ENCODE measurements at regions of chr1 and their contacts with region 1.

Region 1: DNA sequence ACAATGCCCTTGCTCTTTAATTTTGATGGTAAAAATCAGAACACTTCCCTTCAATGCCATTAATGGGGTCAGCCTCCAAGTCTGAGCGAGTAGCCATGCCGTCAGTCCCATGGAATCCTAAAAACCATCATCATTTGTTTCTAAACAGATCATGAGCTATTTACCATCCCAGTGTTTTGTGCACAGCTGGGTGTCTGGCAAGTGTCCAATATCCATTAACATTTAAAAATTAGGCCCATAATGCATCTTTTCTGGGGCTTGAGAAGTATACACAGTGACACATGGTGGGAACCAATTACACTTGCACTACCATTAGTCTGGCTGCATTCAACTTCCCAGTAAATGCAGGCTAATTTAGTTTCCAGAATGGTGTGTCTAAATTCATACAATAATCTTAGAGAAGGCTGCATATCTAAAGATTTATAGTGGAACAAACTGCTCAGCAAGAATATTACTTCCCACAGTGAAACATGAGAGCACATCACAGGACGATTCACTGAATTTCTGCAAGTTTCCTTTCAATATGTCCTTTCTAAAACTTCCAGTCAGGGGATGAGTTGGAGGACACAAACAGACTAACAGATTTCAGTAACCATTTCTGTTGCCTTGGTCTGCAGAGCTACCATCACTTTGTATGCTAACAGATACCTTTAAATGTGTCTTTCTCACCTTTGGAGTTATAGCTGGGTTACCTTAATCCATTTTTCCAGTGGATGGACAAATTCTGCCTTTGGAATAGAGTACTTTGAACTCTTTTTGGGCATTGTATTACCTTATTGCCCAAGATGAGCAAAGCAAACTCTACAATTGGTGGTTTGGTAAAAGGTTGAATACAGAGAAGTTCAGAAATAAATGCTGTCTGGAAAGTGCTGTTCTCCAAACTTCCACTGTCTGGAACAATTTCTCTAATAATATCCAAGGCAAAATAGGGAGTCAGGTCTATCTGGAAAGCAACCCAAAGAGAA is 258.0 kb downstream of the PTBP2 start:
- DNase-seq: peak; percentile 26
- H3K4me3 ChIP-seq: no peak overlapping the region
- H3K27ac ChIP-seq: peak overlapping the region in 1 of 2 experiments; percentile 92; a peak in 2 of 4 replicates
- H3K4me1 ChIP-seq: peaks cover 14 to 25% of the 10 kb centered on the region in 2 experiments; a peak in 3 of 4 replicates
- H3K27me3 ChIP-seq: no peaks in the 10 kb centered on the region
- CTCF ChIP-seq: no peak
- EP300 ChIP-seq: peak in 1 of 2 experiments; percentile 70; a peak in 1 of 4 replicates
- RAD21 ChIP-seq: no peak

Region 2: GRCh38 chr1:96641282-96641681 is 338.3 kb before region 1 on chr1:
- CTCF ChIA-PET with region 1: no interaction called
- POLR2A ChIA-PET with region 1: no interaction called
- DNase-seq: no peak
- H3K4me3 ChIP-seq: no peak overlapping the region
- H3K27ac ChIP-seq: no peak overlapping the region
- H3K4me1 ChIP-seq: no peaks in the 10 kb centered on the region; a peak in 1 of 4 replicates
- H3K27me3 ChIP-seq: no peaks in the 10 kb centered on the region
- CTCF ChIP-seq: no peak
- EP300 ChIP-seq: no peak
- RAD21 ChIP-seq: no peak

Region 3: GRCh38 chr1:96964761-96965160 is 14.8 kb before region 1 on chr1:
- CTCF ChIA-PET with region 1: interaction called, 10 read pairs
- POLR2A ChIA-PET with region 1: no interaction called
- DNase-seq: no peak
- H3K4me3 ChIP-seq: no peak overlapping the region
- H3K27ac ChIP-seq: peak overlapping the region in 1 of 2 experiments; percentile 43; a peak in 2 of 4 replicates
- H3K4me1 ChIP-seq: peaks cover 12 to 16% of the 10 kb centered on the region in 2 experiments
- H3K27me3 ChIP-seq: no peaks in the 10 kb centered on the region
- CTCF ChIP-seq: no peak
- EP300 ChIP-seq: no peak
- RAD21 ChIP-seq: no peak

Region 4: GRCh38 chr1:96992871-96993270 is 13.3 kb after region 1 on chr1:
- CTCF ChIA-PET with region 1: no interaction called
- POLR2A ChIA-PET with region 1: no interaction called
- DNase-seq: no peak
- H3K4me3 ChIP-seq: no peak overlapping the region
- H3K27ac ChIP-seq: no peak overlapping the region
- H3K4me1 ChIP-seq: peaks cover 0 to 19% of the 10 kb centered on the region in 2 experiments; a peak in 3 of 4 replicates
- H3K27me3 ChIP-seq: no peaks in the 10 kb centered on the region
- CTCF ChIP-seq: no peak
- EP300 ChIP-seq: no peak
- RAD21 ChIP-seq: no peak